B cell (primary cell): ENCODE measurements at regions of chr12 and their contacts with region 1.

Region 1: GRCh38 chr12:102061560-102062418 is at the start of gene WASHC3:
- DNase-seq: peak; percentile 95
- ATAC-seq: peak; percentile 96
- H3K4me3 ChIP-seq: peak within 1 kb of the TSS; percentile 72 to 92 (median 89)
- H3K4me3 Mint-ChIP-seq: peak within 1 kb of the TSS; percentile 95
- H3K27ac ChIP-seq: peak within 1 kb of the TSS; percentile 93 to 96
- H3K27ac Mint-ChIP-seq: peak within 1 kb of the TSS; percentile 96
- H3K4me1 ChIP-seq: peaks cover 5 to 12% of the 10 kb centered on the region in 2 donors
- H3K4me1 Mint-ChIP-seq: peaks cover 27% of the 10 kb centered on the region
- H3K27me3 ChIP-seq: peaks cover 0 to 4% (median 0%) of the 10 kb centered on the region in 4 experiments
- H3K27me3 Mint-ChIP-seq: no peaks in the 10 kb centered on the region
- CTCF ChIP-seq: no peak
- total RNA-seq, gene WASHC3: 52.8 and 55.8 TPM in 2 replicates

Region 2: GRCh38 chr12:101792051-101792931 is 269.5 kb before region 1 on chr12:
- CTCF ChIA-PET with region 1: no interaction called
- POLR2A ChIA-PET with region 1: no interaction called
- intact Hi-C with region 1: no loop called
- DNase-seq: no peak
- ATAC-seq: no peak
- H3K4me3 ChIP-seq: no peak overlapping the region
- H3K4me3 Mint-ChIP-seq: no peak overlapping the region
- H3K27ac ChIP-seq: no peak overlapping the region
- H3K27ac Mint-ChIP-seq: no peak overlapping the region
- H3K4me1 ChIP-seq: peaks cover 0 to 5% of the 10 kb centered on the region in 2 donors
- H3K4me1 Mint-ChIP-seq: peaks cover 6% of the 10 kb centered on the region
- H3K27me3 ChIP-seq: no peaks in the 10 kb centered on the region
- H3K27me3 Mint-ChIP-seq: no peaks in the 10 kb centered on the region
- CTCF ChIP-seq: no peak

Region 3: GRCh38 chr12:101931498-101932326 is 130.1 kb before region 1 on chr12:
- CTCF ChIA-PET with region 1: no interaction called
- POLR2A ChIA-PET with region 1: no interaction called
- intact Hi-C with region 1: loop called (anchors 2 kb)
- DNase-seq: peak; percentile 83
- ATAC-seq: peak; percentile 68
- H3K4me3 ChIP-seq: peak overlapping the region in 3 of 5 experiments; percentile 3 to 41 (median 25)
- H3K4me3 Mint-ChIP-seq: peak overlapping the region; percentile 33
- H3K27ac ChIP-seq: peak overlapping the region; percentile 81 to 93
- H3K27ac Mint-ChIP-seq: peak overlapping the region; percentile 88
- H3K4me1 ChIP-seq: peaks cover 76 to 79% of the 10 kb centered on the region in 2 donors
- H3K4me1 Mint-ChIP-seq: peaks cover 79% of the 10 kb centered on the region
- H3K27me3 ChIP-seq: no peaks in the 10 kb centered on the region
- H3K27me3 Mint-ChIP-seq: no peaks in the 10 kb centered on the region
- CTCF ChIP-seq: no peak

Region 4: GRCh38 chr12:102043928-102044327 is 17.9 kb before region 1 on chr12:
- CTCF ChIA-PET with region 1: no interaction called
- POLR2A ChIA-PET with region 1: no interaction called
- intact Hi-C with region 1: no loop called
- DNase-seq: no peak
- ATAC-seq: no peak
- H3K4me3 ChIP-seq: no peak overlapping the region
- H3K4me3 Mint-ChIP-seq: no peak overlapping the region
- H3K27ac ChIP-seq: no peak overlapping the region
- H3K27ac Mint-ChIP-seq: no peak overlapping the region
- H3K4me1 ChIP-seq: peaks cover 0 to 3% of the 10 kb centered on the region in 2 donors
- H3K4me1 Mint-ChIP-seq: peaks cover 3% of the 10 kb centered on the region
- H3K27me3 ChIP-seq: no peaks in the 10 kb centered on the region
- H3K27me3 Mint-ChIP-seq: no peaks in the 10 kb centered on the region
- CTCF ChIP-seq: no peak

Region 5: DNA sequence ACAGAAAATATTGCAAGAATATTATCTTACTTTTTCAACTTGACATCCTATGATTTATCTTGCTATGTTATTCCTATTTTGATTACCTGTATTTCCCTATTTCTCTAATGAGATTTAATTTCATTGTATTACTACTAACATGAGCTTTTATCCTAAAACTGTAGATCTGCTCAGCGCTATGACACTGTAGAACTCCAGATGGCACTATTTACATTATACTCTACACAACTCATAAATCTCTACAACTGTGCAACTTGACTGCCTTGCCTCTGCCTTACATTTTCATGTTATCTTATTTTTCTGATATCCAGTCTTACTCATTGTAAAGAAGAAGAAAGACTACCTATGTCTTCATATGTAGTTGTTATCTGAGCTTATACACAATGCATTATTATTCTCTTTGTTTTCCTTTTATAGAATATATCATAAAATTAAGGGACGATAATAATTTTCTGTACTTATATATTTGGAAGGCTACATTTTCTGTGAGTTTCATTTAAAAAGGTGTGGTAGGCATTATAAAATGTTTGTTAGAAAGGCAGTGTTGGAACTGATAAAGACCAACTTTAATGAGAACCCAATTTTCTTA is 34.0 kb after region 1 on chr12:
- CTCF ChIA-PET with region 1: no interaction called
- POLR2A ChIA-PET with region 1: no interaction called
- intact Hi-C with region 1: no loop called
- DNase-seq: peak; percentile 7
- ATAC-seq: no peak
- H3K4me3 ChIP-seq: no peak overlapping the region
- H3K4me3 Mint-ChIP-seq: no peak overlapping the region
- H3K27ac ChIP-seq: no peak overlapping the region
- H3K27ac Mint-ChIP-seq: no peak overlapping the region
- H3K4me1 ChIP-seq: no peaks in the 10 kb centered on the region
- H3K4me1 Mint-ChIP-seq: no peaks in the 10 kb centered on the region
- H3K27me3 ChIP-seq: no peaks in the 10 kb centered on the region
- H3K27me3 Mint-ChIP-seq: no peaks in the 10 kb centered on the region
- CTCF ChIP-seq: peak; percentile 47

Region 6: GRCh38 chr12:102119674-102120563 is 58.1 kb after region 1 on chr12 and contains the starts of genes NUP37 and PARPBP:
- CTCF ChIA-PET with region 1: no interaction called
- POLR2A ChIA-PET with region 1: no interaction called
- intact Hi-C with region 1: loop called (anchors 1 kb)
- DNase-seq: peak; percentile 92
- ATAC-seq: peak; percentile 98
- H3K4me3 ChIP-seq: peak within 1 kb of the TSS; percentile 82 to 90 (median 84)
- H3K4me3 Mint-ChIP-seq: peak within 1 kb of the TSS; percentile 89
- H3K27ac ChIP-seq: peak within 1 kb of the TSS; percentile 80 to 88
- H3K27ac Mint-ChIP-seq: peak within 1 kb of the TSS; percentile 91
- H3K4me1 ChIP-seq: peaks cover 15 to 18% of the 10 kb centered on the region in 2 donors
- H3K4me1 Mint-ChIP-seq: peaks cover 16% of the 10 kb centered on the region
- H3K27me3 ChIP-seq: no peaks in the 10 kb centered on the region
- H3K27me3 Mint-ChIP-seq: no peaks in the 10 kb centered on the region
- CTCF ChIP-seq: no peak
- total RNA-seq, gene NUP37: 19.1 and 22.1 TPM in 2 replicates
- total RNA-seq, gene PARPBP: 5.2 and 6.6 TPM in 2 replicates